ENCODE measurements at regions of chr2 and their contacts with region 1.

Region 1: GRCh38 chr2:34519659-34520058 is 920.6 kb upstream of the FAM98A start:
- DNase-seq: no peak
- H3K4me3 ChIP-seq: no peak overlapping the region
- H3K27ac ChIP-seq: no peak overlapping the region
- H3K4me1 ChIP-seq: no peaks in the 10 kb centered on the region
- H3K27me3 ChIP-seq: no peaks in the 10 kb centered on the region
- CTCF ChIP-seq: no peak
- POLR2A ChIP-seq: no peak

Region 2: GRCh38 chr2:34474646-34475045 is 45.0 kb before region 1 on chr2:
- intact Hi-C with region 1: loop called (anchors 5 kb)
- DNase-seq: no peak
- H3K4me3 ChIP-seq: no peak overlapping the region
- H3K27ac ChIP-seq: no peak overlapping the region
- H3K4me1 ChIP-seq: no peaks in the 10 kb centered on the region
- H3K27me3 ChIP-seq: no peaks in the 10 kb centered on the region
- CTCF ChIP-seq: no peak
- POLR2A ChIP-seq: no peak